CD14-positive monocyte (primary cell): ENCODE measurements at regions of chr11 and their contacts with region 1.

Region 1: GRCh38 chr11:4480574-4481566 is 1.6 kb upstream of the OR52K1 start:
- DNase-seq: peak; percentile 38 to 84 (median 65)
- H3K4me3 ChIP-seq: peak overlapping the region in 1 of 3 experiments; percentile 9
- H3K4me3 Mint-ChIP-seq: no peak overlapping the region
- H3K27ac ChIP-seq: peak overlapping the region in 1 of 2 donors; percentile 68
- H3K27ac Mint-ChIP-seq: peak overlapping the region; percentile 50 to 93 (median 83)
- H3K4me1 ChIP-seq: peaks cover 40 to 43% of the 10 kb centered on the region in 2 donors
- H3K4me1 Mint-ChIP-seq: peaks cover 33% of the 10 kb centered on the region
- H3K27me3 ChIP-seq: no peaks in the 10 kb centered on the region
- H3K27me3 Mint-ChIP-seq: no peaks in the 10 kb centered on the region
- CTCF ChIP-seq: no peak

Region 2: DNA sequence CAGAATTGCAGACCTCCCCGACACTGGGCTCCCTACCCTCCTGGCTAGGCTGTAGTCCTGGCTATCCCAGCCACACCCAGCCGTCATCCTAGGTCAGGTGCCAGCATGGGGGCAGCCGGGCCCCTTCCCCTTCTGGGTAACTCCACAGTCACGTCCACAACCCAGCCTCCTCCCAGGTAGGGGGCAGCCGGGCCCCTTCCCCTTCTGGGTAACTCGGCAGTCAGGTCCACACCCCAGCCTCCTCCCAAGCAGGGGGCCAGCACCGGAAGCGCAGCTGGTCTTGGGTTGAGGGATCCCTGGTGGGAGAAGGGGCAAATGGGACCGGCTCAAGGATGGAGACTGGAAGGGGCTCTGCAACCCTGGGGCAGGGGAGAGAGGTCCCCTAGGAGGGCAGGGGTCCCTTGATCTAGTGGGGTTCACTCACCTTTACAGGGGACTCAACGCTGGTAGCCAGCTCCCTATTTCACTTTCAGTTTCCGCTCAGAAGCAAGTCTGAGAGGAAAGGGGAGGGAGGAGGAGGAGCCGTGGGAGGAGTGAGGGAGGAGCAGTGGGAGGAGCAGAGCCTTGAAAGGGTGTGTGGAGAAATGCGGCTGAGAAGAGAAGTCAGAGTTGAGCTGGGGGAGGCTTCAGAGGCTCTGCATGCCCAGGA is 87.5 kb before region 1 on chr11 and contains the start of gene TRIM21:
- intact Hi-C with region 1: loop called in 1 of 2 experiments (anchors 5 kb)
- DNase-seq: peak; percentile 86 to 89 (median 88)
- H3K4me3 ChIP-seq: peak within 1 kb of the TSS; percentile 66 to 99 (median 87)
- H3K4me3 Mint-ChIP-seq: peak within 1 kb of the TSS; percentile 91 to 95
- H3K27ac ChIP-seq: peak within 1 kb of the TSS; percentile 79 to 99
- H3K27ac Mint-ChIP-seq: peak within 1 kb of the TSS; percentile 92 to 95 (median 94)
- H3K4me1 ChIP-seq: peaks cover 19 to 43% of the 10 kb centered on the region in 2 donors
- H3K4me1 Mint-ChIP-seq: peaks cover 53% of the 10 kb centered on the region
- H3K27me3 ChIP-seq: no peaks in the 10 kb centered on the region
- H3K27me3 Mint-ChIP-seq: peaks cover 0 to 1% (median 0%) of the 10 kb centered on the region in 3 donors
- CTCF ChIP-seq: no peak
- polyA plus RNA-seq, gene TRIM21: 16.8 to 42.5 (median 29.9) TPM

Region 3: DNA sequence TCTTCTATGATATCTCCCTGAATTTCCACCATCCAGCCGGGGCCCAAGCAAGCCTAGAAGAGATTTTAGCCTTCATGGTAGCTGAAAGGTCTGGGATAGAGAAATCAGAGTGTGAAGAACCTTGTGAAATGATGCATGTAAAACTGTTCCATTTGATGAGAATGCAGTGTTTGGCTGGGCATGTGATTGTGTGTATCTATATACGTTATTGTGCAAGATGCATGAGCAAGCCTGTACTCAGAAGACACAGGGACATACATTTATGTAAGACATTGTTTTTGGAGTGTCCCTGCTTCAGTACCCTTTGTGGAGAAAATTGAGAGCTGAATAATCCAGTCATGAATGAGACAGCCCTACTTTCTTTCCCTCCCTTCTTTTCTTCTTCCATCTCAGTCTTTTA is 47.0 kb before region 1 on chr11:
- intact Hi-C with region 1: loop called in 1 of 2 experiments (anchors 10 kb)
- DNase-seq: peak; percentile 73 to 89 (median 80)
- H3K4me3 ChIP-seq: peak overlapping the region in 1 of 3 experiments; percentile 22
- H3K4me3 Mint-ChIP-seq: peak overlapping the region in 1 of 2 donors; percentile 6
- H3K27ac ChIP-seq: peak overlapping the region; percentile 55 to 82
- H3K27ac Mint-ChIP-seq: peak overlapping the region; percentile 87 to 93 (median 89)
- H3K4me1 ChIP-seq: peaks cover 52 to 66% of the 10 kb centered on the region in 2 donors
- H3K4me1 Mint-ChIP-seq: peaks cover 65% of the 10 kb centered on the region
- H3K27me3 ChIP-seq: no peaks in the 10 kb centered on the region
- H3K27me3 Mint-ChIP-seq: no peaks in the 10 kb centered on the region
- CTCF ChIP-seq: no peak

Region 4: GRCh38 chr11:4448995-4449394 is 31.9 kb before region 1 on chr11 and contains the start of gene OR52K2:
- intact Hi-C with region 1: loop called in 1 of 2 experiments (anchors 5 kb)
- DNase-seq: no peak
- H3K4me3 ChIP-seq: peak within 1 kb of the TSS in 1 of 3 experiments; percentile 4
- H3K4me3 Mint-ChIP-seq: no peak within 1 kb of the TSS
- H3K27ac ChIP-seq: peak within 1 kb of the TSS in 1 of 2 donors; percentile 56
- H3K27ac Mint-ChIP-seq: peak within 1 kb of the TSS in 5 of 7 donors; percentile 11 to 58 (median 44)
- H3K4me1 ChIP-seq: peaks cover 48 to 70% of the 10 kb centered on the region in 2 donors
- H3K4me1 Mint-ChIP-seq: peaks cover 33% of the 10 kb centered on the region
- H3K27me3 ChIP-seq: no peaks in the 10 kb centered on the region
- H3K27me3 Mint-ChIP-seq: no peaks in the 10 kb centered on the region
- CTCF ChIP-seq: no peak
- polyA plus RNA-seq, gene OR52K2: 0.16 to 1.5 (median 0.41) TPM

Region 5: DNA sequence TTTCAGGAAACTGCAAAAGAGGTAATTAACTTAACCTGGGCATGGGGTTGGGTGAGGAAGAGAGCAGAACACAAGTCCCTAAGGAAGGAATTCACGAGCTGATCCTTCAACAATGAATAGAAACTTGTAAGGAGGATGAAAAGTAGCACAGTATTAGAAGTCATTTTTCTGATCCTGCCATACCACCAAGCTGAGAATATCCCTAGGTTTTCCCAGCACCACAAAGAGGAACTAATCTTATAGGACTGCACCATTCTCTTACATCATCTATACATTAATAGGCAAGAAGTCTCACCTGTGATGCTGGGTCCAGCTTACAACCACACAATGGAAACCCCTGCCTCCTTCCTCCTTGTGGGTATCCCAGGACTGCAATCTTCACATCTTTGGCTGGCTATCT is 112.9 kb after region 1 on chr11 and contains the start of gene OR52I1:
- intact Hi-C with region 1: no loop called
- DNase-seq: no peak
- H3K4me3 ChIP-seq: no peak within 1 kb of the TSS
- H3K4me3 Mint-ChIP-seq: no peak within 1 kb of the TSS
- H3K27ac ChIP-seq: no peak within 1 kb of the TSS
- H3K27ac Mint-ChIP-seq: no peak within 1 kb of the TSS
- H3K4me1 ChIP-seq: no peaks in the 10 kb centered on the region
- H3K4me1 Mint-ChIP-seq: no peaks in the 10 kb centered on the region
- H3K27me3 ChIP-seq: peaks cover 3 to 4% of the 10 kb centered on the region in 2 donors
- H3K27me3 Mint-ChIP-seq: peaks cover 6 to 11% (median 8%) of the 10 kb centered on the region in 3 donors
- CTCF ChIP-seq: no peak
- polyA plus RNA-seq, gene OR52I1: 0.09 TPM in 1 of 3 donors, not detected in the others